Activated CD4-positive, alpha-beta memory T cell treated with anti-CD3 and anti-CD28 coated beads, Interleukin-2, amount 10 ng/mL, durations not matched to agents 7 days and 5 days (primary cell): ENCODE measurements at regions of chr9 and their contacts with region 1.

Region 1: GRCh38 chr9:5450359-5451091 is at the start of gene CD274:
- DNase-seq: peak; percentile 86
- H3K4me3 Mint-ChIP-seq: peak within 1 kb of the TSS; percentile 95
- H3K27ac Mint-ChIP-seq: peak within 1 kb of the TSS; percentile 84
- H3K4me1 Mint-ChIP-seq: peaks cover 75% of the 10 kb centered on the region
- H3K27me3 Mint-ChIP-seq: no peaks in the 10 kb centered on the region
- total RNA-seq, gene CD274: 12.4 to 12.6 TPM

Region 2: GRCh38 chr9:5466005-5466404 is 15.5 kb after region 1 on chr9:
- CTCF ChIA-PET with region 1: interaction called, 18 read pairs
- POLR2A ChIA-PET with region 1: interaction called, 7 read pairs
- DNase-seq: no peak
- H3K4me3 Mint-ChIP-seq: no peak overlapping the region
- H3K27ac Mint-ChIP-seq: no peak overlapping the region
- H3K4me1 Mint-ChIP-seq: peaks cover 10% of the 10 kb centered on the region
- H3K27me3 Mint-ChIP-seq: no peaks in the 10 kb centered on the region

Region 3: GRCh38 chr9:5510360-5510931 is 59.9 kb after region 1 on chr9 and contains the start of gene PDCD1LG2:
- CTCF ChIA-PET with region 1: interaction called, 17 read pairs
- POLR2A ChIA-PET with region 1: interaction called, 19 read pairs
- DNase-seq: peak; percentile 59
- H3K4me3 Mint-ChIP-seq: peak within 1 kb of the TSS; percentile 80
- H3K27ac Mint-ChIP-seq: peak within 1 kb of the TSS; percentile 95
- H3K4me1 Mint-ChIP-seq: peaks cover 60% of the 10 kb centered on the region
- H3K27me3 Mint-ChIP-seq: no peaks in the 10 kb centered on the region
- total RNA-seq, gene PDCD1LG2: 4.1 to 4.8 TPM

Region 4: GRCh38 chr9:5536684-5537083 is 86.2 kb after region 1 on chr9:
- CTCF ChIA-PET with region 1: no interaction called
- POLR2A ChIA-PET with region 1: no interaction called
- DNase-seq: no peak
- H3K4me3 Mint-ChIP-seq: no peak overlapping the region
- H3K27ac Mint-ChIP-seq: no peak overlapping the region
- H3K4me1 Mint-ChIP-seq: peaks cover 36% of the 10 kb centered on the region
- H3K27me3 Mint-ChIP-seq: no peaks in the 10 kb centered on the region

Region 5: DNA sequence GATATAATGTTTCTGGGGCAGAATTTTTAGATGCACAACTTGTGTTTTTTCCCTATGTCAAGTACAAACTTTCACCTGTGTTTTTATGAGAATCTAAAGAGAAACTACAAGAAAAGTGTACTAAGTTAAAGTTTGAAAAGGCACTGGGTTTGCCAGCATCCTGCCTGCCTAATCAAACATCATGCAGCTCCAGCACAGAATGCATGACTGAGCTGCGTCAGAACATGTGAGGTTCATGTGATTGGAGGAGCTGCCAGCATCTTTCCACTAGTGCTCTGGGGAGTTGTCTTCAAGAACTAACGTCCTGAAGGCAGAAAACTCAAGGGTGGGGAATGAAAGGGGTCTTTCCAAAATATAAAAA is 132.3 kb after region 1 on chr9:
- CTCF ChIA-PET with region 1: interaction called, 130 read pairs
- POLR2A ChIA-PET with region 1: interaction called, 47 read pairs
- DNase-seq: peak; percentile 53
- H3K4me3 Mint-ChIP-seq: no peak overlapping the region
- H3K27ac Mint-ChIP-seq: no peak overlapping the region
- H3K4me1 Mint-ChIP-seq: peaks cover 65% of the 10 kb centered on the region
- H3K27me3 Mint-ChIP-seq: no peaks in the 10 kb centered on the region